ENCODE measurements at regions of chr2 and their contacts with region 1.

Region 1: GRCh38 chr2:189783927-189784867 is at the starts of genes ORMDL1 and PMS1:
- DNase-seq: peak; percentile 97
- ATAC-seq: peak; percentile 85 to 97 (median 87)
- H3K4me3 ChIP-seq: peak within 1 kb of the TSS; percentile 92
- H3K4me3 Mint-ChIP-seq: peak within 1 kb of the TSS; percentile 92
- H3K27ac ChIP-seq: peak within 1 kb of the TSS; percentile 98
- H3K27ac Mint-ChIP-seq: peak within 1 kb of the TSS; percentile 96 to 97
- H3K4me1 ChIP-seq: peaks cover 10% of the 10 kb centered on the region
- H3K4me1 Mint-ChIP-seq: peaks cover 42 to 58% of the 10 kb centered on the region in 2 donors
- H3K27me3 ChIP-seq: no peaks in the 10 kb centered on the region
- H3K27me3 Mint-ChIP-seq: no peaks in the 10 kb centered on the region
- CTCF ChIP-seq: no peak
- total RNA-seq, gene ORMDL1: 83.1 to 103 (median 101) TPM
- total RNA-seq, gene PMS1: 28.9 to 32.3 (median 29.1) TPM

Region 2: GRCh38 chr2:189440947-189441708 is 343.1 kb before region 1 on chr2 and contains the start of gene WDR75:
- intact Hi-C with region 1: loop called (anchors 2 kb)
- DNase-seq: peak; percentile 87 to 96
- ATAC-seq: peak; percentile 94 to 99 (median 94)
- H3K4me3 ChIP-seq: peak within 1 kb of the TSS; percentile 96
- H3K4me3 Mint-ChIP-seq: peak within 1 kb of the TSS; percentile 96
- H3K27ac ChIP-seq: peak within 1 kb of the TSS; percentile 99
- H3K27ac Mint-ChIP-seq: peak within 1 kb of the TSS; percentile 96 to 98
- H3K4me1 ChIP-seq: peaks cover 5% of the 10 kb centered on the region
- H3K4me1 Mint-ChIP-seq: peaks cover 5 to 7% of the 10 kb centered on the region in 2 donors
- H3K27me3 ChIP-seq: no peaks in the 10 kb centered on the region
- H3K27me3 Mint-ChIP-seq: no peaks in the 10 kb centered on the region
- CTCF ChIP-seq: no peak
- total RNA-seq, gene WDR75: 31.4 to 38.5 (median 32.3) TPM

Region 3: DNA sequence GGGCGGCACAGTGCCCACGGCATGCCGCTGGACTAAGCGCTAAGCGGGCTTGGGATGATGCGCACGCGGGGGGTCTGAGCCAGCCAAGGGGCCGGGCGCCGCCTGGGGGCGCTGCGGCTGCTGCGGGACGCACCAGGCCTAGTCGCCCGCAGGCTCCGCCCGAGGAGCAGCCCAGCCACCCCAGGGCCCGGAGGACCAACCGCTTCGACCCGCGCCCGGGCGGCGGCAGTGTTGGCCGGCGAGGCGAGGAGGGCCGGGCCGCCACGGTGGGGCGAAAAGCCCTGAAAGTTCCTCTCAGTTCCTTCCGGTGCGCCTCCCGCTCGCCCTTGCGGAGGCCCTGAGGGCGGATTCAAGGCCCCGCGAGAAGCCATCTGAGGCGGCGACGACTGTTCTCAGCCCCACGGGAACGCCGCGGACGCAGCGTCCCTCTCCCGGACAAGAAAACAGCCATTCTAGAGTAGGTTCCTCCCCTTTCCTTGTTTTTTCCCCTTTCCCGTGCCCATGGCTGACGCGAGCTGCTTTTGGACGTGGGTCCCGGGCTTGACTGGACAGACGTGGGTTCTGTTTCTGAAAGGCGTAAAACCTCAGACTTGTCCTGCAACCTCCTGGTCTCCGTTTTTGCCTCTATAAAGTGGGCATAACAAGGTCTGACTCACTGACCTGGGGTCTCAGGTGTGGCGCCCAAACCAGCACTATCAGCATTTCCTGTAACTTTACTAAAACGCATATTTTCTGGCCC is 109.7 kb before region 1 on chr2 and contains the start of gene ANKAR:
- intact Hi-C with region 1: loop called (anchors 5 kb)
- DNase-seq: peak; percentile 80 to 90
- ATAC-seq: peak; percentile 93 to 98 (median 94)
- H3K4me3 ChIP-seq: peak within 1 kb of the TSS; percentile 87
- H3K4me3 Mint-ChIP-seq: peak within 1 kb of the TSS; percentile 89
- H3K27ac ChIP-seq: peak within 1 kb of the TSS; percentile 99
- H3K27ac Mint-ChIP-seq: peak within 1 kb of the TSS; percentile 92 to 93
- H3K4me1 ChIP-seq: peaks cover 20% of the 10 kb centered on the region
- H3K4me1 Mint-ChIP-seq: peaks cover 40 to 42% of the 10 kb centered on the region in 2 donors
- H3K27me3 ChIP-seq: no peaks in the 10 kb centered on the region
- H3K27me3 Mint-ChIP-seq: no peaks in the 10 kb centered on the region
- CTCF ChIP-seq: peak; percentile 73
- total RNA-seq, gene ANKAR: 12.9 to 18.0 (median 17.4) TPM

Region 4: GRCh38 chr2:189762551-189763298 is 21.5 kb before region 1 on chr2 and contains the start of gene OSGEPL1:
- intact Hi-C with region 1: loop called (anchors 1 kb)
- DNase-seq: peak; percentile 85 to 96
- ATAC-seq: peak; percentile 91 to 95 (median 93)
- H3K4me3 ChIP-seq: peak within 1 kb of the TSS; percentile 70
- H3K4me3 Mint-ChIP-seq: peak within 1 kb of the TSS; percentile 99
- H3K27ac ChIP-seq: peak within 1 kb of the TSS; percentile 86
- H3K27ac Mint-ChIP-seq: peak within 1 kb of the TSS; percentile 95 to 98
- H3K4me1 ChIP-seq: no peaks in the 10 kb centered on the region
- H3K4me1 Mint-ChIP-seq: peaks cover 6 to 7% of the 10 kb centered on the region in 2 donors
- H3K27me3 ChIP-seq: no peaks in the 10 kb centered on the region
- H3K27me3 Mint-ChIP-seq: no peaks in the 10 kb centered on the region
- CTCF ChIP-seq: peak; percentile 60
- total RNA-seq, gene OSGEPL1: 5.6 to 10.2 (median 8.5) TPM

Region 5: DNA sequence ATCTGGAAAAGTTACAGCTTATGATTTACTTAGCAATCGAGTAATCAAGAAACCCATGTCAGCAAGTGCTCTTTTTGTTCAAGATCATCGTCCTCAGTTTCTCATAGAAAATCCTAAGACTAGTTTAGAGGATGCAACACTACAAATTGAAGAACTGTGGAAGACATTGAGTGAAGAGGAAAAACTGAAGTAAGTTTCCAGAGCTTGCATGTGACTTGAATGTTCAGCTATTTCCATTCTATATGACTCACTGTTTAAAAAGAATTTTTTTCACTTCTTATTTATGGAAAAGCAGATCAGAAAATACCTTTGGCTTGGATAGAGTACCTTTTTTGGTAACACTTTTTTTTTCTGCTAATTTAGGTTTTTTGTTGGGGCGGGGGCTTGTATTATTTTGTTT is 70.7 kb after region 1 on chr2:
- intact Hi-C with region 1: no loop called
- DNase-seq: no peak
- ATAC-seq: no peak
- H3K4me3 ChIP-seq: no peak overlapping the region
- H3K4me3 Mint-ChIP-seq: no peak overlapping the region
- H3K27ac ChIP-seq: no peak overlapping the region
- H3K27ac Mint-ChIP-seq: no peak overlapping the region
- H3K4me1 ChIP-seq: no peaks in the 10 kb centered on the region
- H3K4me1 Mint-ChIP-seq: no peaks in the 10 kb centered on the region
- H3K27me3 ChIP-seq: no peaks in the 10 kb centered on the region
- H3K27me3 Mint-ChIP-seq: no peaks in the 10 kb centered on the region
- CTCF ChIP-seq: no peak

Region 6: DNA sequence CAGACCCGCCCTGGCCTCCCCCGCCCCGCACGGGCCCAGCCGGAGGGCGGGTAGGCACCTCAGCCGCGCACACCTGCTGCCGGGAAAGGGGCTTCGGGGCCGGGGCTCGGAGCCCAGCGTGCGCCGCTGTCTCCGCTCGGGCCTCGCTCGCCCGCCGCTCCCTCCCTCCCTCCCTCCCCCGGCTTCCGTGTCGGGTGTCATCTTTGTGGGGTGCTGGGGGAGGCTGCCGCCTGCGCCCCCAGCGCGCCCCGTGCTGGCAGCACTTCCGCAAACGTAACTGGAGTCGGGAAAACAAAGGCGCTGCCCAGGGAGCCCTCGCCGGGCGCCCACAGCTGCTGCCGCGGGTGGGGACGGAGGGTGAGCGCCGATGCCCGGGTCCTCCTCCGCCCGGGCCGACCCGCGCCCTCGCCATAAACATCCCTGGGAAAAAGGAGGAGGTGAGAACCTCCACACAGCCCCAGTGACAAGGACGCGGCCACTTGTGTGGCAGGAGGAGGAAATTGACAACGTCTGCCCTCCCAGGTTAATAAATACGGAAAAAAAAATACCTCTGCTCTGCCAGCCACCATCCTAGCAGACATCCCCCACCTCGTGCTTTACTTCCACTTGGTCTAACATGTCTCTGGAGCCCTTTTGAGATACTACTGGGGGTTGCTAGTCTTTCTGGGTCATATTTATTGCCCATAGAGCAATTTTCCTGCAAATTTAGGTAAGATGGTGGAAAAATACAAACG is 624.5 kb after region 1 on chr2:
- intact Hi-C with region 1: loop called (anchors 10 kb)
- DNase-seq: peak; percentile 59 to 91
- ATAC-seq: peak; percentile 69 to 85 (median 79)
- H3K4me3 ChIP-seq: peak overlapping the region; percentile 92
- H3K4me3 Mint-ChIP-seq: peak overlapping the region; percentile 90
- H3K27ac ChIP-seq: peak overlapping the region; percentile 97
- H3K27ac Mint-ChIP-seq: peak overlapping the region in 1 of 2 donors; percentile 83
- H3K4me1 ChIP-seq: peaks cover 19% of the 10 kb centered on the region
- H3K4me1 Mint-ChIP-seq: peaks cover 25 to 31% of the 10 kb centered on the region in 2 donors
- H3K27me3 ChIP-seq: no peaks in the 10 kb centered on the region
- H3K27me3 Mint-ChIP-seq: no peaks in the 10 kb centered on the region
- CTCF ChIP-seq: no peak

Region 7: GRCh38 chr2:190534310-190535120 is 750.3 kb after region 1 on chr2 and contains the start of gene NEMP2:
- intact Hi-C with region 1: loop called (anchors 10 kb)
- DNase-seq: peak; percentile 84 to 85
- ATAC-seq: peak; percentile 78 to 92 (median 83)
- H3K4me3 ChIP-seq: peak within 1 kb of the TSS; percentile 74
- H3K4me3 Mint-ChIP-seq: peak within 1 kb of the TSS; percentile 97
- H3K27ac ChIP-seq: peak within 1 kb of the TSS; percentile 93
- H3K27ac Mint-ChIP-seq: peak within 1 kb of the TSS; percentile 98 to 99
- H3K4me1 ChIP-seq: peaks cover 18% of the 10 kb centered on the region
- H3K4me1 Mint-ChIP-seq: peaks cover 44 to 45% of the 10 kb centered on the region in 2 donors
- H3K27me3 ChIP-seq: no peaks in the 10 kb centered on the region
- H3K27me3 Mint-ChIP-seq: no peaks in the 10 kb centered on the region
- CTCF ChIP-seq: no peak
- total RNA-seq, gene NEMP2: 17.2 to 21.0 (median 18.3) TPM

Measured in natural killer cell (primary cell).